ENCODE measurements at regions of chr11 and their contacts with region 1.

Region 1: DNA sequence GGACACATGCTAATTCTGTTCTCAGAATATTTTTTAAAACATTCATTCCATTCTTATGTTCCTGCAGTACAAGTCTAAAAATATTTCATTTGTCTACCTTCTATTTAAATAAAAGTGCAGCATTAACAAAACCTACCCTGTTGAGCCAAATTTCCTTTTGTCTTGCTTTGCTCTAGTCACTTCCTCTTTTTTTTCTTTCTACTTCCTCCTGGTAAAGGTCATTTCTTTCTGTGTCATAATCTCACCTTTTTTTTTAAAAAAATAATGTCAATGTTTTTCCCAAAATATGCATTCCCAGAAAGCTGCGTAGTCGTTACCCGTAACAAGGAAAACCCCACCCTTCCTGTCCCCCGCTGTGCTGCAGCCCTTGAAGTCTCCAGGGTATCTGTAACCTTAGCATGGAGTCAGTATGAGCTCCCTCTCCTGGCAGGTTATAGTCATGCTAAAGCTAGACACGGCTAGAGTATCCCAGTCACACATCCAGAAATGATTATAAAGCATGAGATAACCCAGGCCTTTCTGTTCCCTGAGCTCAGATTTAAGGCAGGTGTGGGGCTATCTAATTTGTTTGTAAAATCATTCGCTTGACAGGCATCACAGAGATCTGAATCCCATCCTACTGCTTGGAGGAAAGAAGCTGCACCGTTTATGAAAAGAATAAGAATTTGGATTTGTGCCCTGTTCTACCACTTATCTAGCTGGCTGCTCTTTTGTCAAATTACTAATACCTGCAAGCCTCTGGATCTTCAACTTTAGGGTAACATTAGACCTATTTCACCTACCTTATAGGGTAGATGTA is 51.1 kb upstream of the EED start:
- DNase-seq: peak; percentile 64 to 88 (median 79)
- H3K4me3 ChIP-seq: peak overlapping the region in 1 of 4 donors; percentile 27
- H3K27ac ChIP-seq: peak overlapping the region in 2 of 5 donors; percentile 54 to 77
- H3K4me1 ChIP-seq: peaks cover 0 to 18% of the 10 kb centered on the region in 2 donors
- H3K27me3 ChIP-seq: no peaks in the 10 kb centered on the region
- CTCF ChIP-seq: peak; percentile 55 to 87 (median 76)
- POLR2A ChIP-seq: no peak

Region 2: DNA sequence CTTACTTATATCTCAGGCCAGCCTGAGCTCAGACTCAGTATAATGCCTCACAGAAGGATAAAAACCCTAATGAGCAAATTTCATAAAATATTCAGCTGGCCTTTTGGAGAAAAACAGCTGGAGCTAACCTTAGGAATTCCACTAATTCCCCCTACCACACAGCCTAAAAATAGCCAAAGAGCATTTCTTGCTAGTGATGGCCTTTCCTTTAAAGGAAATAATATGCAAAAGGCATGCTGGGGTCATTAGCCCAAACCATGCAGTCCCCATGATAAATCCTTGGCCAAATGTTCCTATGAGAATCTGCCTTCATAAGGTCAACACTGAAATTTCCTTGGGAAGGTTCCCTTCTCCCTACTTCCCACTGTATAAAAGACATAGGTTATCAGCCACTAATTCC is 420.8 kb before region 1 on chr11:
- intact Hi-C with region 1: no loop called
- DNase-seq: no peak
- H3K4me3 ChIP-seq: no peak overlapping the region
- H3K27ac ChIP-seq: peak overlapping the region in 3 of 5 donors; percentile 6 to 61 (median 41)
- H3K4me1 ChIP-seq: no peaks in the 10 kb centered on the region
- H3K27me3 ChIP-seq: no peaks in the 10 kb centered on the region
- CTCF ChIP-seq: no peak
- POLR2A ChIP-seq: no peak

Region 3: DNA sequence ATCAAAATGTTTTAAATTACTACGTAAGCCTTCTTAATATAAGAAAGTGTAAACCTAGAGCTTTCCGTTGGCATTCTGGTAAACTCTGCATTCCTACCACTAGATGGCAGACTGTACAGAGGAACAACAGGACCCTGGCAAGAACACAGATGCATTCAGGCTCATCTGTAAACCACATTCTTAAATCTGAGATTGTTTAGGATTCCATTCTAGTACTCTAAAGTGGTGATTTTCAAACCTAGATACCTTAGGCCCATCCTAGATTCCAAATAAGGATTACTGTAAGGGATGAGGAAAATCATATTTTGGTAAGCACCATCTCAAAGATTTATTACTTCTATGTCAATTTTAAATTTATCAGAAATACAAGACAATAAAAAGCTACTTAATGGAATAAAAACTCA is 151.5 kb before region 1 on chr11:
- intact Hi-C with region 1: loop called (anchors 5 to 10 kb)
- DNase-seq: peak; percentile 56 to 85 (median 71)
- H3K4me3 ChIP-seq: peak overlapping the region in 1 of 4 donors; percentile 31
- H3K27ac ChIP-seq: no peak overlapping the region
- H3K4me1 ChIP-seq: peaks cover 4 to 62% of the 10 kb centered on the region in 2 donors
- H3K27me3 ChIP-seq: no peaks in the 10 kb centered on the region
- CTCF ChIP-seq: peak; percentile 78 to 99 (median 94)
- POLR2A ChIP-seq: no peak

Region 4: DNA sequence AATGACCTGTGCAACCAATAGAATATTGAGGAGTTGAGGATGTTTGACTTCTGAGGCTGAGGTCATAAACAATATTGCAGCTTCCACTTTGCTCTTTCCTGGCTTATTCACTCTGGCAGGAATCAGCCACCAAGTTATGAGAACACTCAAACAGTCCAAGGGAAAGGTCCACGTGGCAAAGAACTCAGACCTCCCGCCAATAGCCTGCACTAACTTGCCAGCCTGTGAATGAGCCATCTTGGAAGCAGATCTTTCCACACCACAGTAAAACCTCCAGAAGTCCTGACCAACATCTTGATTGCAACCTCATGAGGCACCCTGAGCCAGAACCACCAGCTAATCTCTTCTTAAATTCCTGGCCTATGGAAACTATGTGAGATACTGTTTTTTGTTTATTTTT is 101.9 kb before region 1 on chr11:
- intact Hi-C with region 1: no loop called
- DNase-seq: no peak
- H3K4me3 ChIP-seq: no peak overlapping the region
- H3K27ac ChIP-seq: no peak overlapping the region
- H3K4me1 ChIP-seq: no peaks in the 10 kb centered on the region
- H3K27me3 ChIP-seq: no peaks in the 10 kb centered on the region
- CTCF ChIP-seq: no peak
- POLR2A ChIP-seq: no peak

Region 5: DNA sequence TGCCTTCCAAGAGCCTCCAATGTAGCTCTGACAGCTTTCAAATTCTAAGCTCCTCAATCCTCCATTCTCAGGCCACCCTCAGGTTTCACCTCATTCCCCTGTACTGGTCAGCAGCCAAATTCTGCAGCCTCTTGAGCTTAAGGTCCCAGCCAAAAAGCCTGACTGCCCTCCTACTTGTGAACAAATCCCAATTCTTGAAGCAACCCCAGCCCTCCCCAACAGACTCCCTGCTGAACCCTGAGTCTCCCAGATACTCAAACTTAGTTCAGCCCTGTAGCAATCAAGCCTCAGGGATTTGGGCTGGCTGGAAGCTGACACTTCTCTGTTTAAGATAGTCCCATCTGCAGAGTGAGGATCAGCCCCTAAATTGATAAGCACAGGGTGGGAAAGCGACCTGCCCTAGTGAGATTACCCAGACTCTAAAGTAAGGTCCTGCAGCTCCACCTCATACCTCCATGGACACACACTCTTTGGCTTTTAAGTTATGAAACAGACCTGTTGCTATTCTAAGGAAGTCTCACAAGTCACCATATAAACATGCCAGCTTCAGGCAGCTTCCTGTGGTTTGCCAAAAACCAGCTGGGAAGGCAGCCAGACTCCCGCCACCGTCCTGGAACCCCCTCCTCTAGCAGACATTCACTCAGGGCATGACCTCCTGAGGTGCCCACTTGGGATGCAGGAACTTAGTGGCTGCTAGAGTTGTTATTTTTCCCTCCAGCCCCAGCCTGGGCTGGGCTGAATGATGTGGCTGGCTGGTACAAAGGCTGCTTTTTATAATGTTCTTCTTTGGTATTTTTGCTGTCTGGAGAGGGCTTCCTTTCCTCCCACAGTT is 42.1 kb before region 1 on chr11:
- intact Hi-C with region 1: no loop called
- DNase-seq: no peak
- H3K4me3 ChIP-seq: no peak overlapping the region
- H3K27ac ChIP-seq: peak overlapping the region in 1 of 5 donors; percentile 15
- H3K4me1 ChIP-seq: peaks cover 0 to 25% of the 10 kb centered on the region in 2 donors
- H3K27me3 ChIP-seq: no peaks in the 10 kb centered on the region
- CTCF ChIP-seq: no peak
- POLR2A ChIP-seq: no peak

Region 6: DNA sequence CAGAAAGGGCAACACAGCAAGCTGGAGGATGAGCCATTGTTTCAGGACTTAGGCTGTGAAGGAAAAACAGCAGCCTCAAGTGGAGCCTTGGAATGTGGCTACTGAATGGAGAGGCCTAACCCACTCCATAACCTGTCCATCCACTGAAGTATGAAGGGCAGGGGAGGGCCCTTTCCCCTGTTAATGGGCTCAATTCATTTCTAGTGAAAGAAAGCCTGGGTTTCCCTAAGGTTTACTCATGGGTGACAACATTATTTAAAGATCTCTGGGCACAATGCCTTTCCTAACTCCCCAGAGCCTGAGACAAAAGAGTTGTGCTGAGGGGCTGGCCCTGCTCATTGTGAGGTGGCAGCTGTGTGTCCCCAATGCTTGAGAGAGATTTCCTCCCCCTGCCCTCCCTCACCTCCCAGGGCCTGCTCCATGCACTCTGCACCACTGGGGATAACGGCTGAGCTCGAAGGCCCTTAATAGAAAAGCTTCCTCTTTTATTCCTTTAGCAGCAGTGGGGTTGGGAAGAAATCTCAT is 395.1 kb after region 1 on chr11:
- intact Hi-C with region 1: no loop called
- DNase-seq: no peak
- H3K4me3 ChIP-seq: no peak overlapping the region
- H3K27ac ChIP-seq: no peak overlapping the region
- H3K4me1 ChIP-seq: peaks cover 11 to 22% of the 10 kb centered on the region in 2 donors
- H3K27me3 ChIP-seq: no peaks in the 10 kb centered on the region
- CTCF ChIP-seq: no peak
- POLR2A ChIP-seq: no peak

Measured in adrenal gland (tissue), 19 donors.